GM10248 (cell line): ENCODE measurements at regions of chr7 and their contacts with region 1.

Region 1: GRCh38 chr7:11212080-11212711 is 238.5 kb downstream of the PHF14 start:
- DNase-seq: peak; percentile 39
- CTCF ChIP-seq: peak; percentile 89

Region 2: DNA sequence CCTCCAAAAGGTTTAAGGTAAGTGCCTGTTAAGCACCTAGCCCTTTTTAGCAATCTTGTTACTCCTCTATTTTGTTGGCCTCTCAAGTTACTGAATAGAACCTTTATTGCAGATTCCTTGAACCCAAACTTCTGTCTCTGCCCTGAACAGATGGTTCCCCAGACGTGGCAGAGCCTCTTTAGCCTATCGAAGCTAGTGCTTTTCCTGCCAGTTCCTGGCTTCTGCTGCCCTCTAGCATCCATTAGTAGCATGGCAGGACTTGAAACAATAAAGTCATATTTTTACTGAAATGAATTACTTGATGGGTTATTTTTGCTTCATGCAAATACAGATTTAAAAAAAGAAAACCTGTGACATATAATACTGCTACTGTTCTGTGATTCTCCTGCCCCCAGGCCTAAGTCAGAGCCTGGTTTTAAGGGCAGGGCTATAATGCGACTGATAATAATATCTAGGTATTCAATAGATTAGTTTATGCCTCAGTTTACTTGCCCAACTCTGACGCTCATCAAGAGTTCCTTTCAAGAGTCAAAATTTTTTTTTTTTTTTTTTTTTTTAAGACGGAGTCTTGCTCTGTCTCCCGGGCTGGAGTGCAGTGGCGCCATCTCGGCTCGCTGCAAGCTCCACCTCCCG is 322.8 kb before region 1 on chr7:
- CTCF ChIA-PET with region 1: interaction called, 12 read pairs
- POLR2A ChIA-PET with region 1: no interaction called
- DNase-seq: peak; percentile 71
- CTCF ChIP-seq: peak; percentile 82

Region 3: GRCh38 chr7:10939911-10940703 is 272.1 kb before region 1 on chr7:
- CTCF ChIA-PET with region 1: interaction called, 13 read pairs
- POLR2A ChIA-PET with region 1: no interaction called
- DNase-seq: peak; percentile 95
- CTCF ChIP-seq: no peak

Region 4: DNA sequence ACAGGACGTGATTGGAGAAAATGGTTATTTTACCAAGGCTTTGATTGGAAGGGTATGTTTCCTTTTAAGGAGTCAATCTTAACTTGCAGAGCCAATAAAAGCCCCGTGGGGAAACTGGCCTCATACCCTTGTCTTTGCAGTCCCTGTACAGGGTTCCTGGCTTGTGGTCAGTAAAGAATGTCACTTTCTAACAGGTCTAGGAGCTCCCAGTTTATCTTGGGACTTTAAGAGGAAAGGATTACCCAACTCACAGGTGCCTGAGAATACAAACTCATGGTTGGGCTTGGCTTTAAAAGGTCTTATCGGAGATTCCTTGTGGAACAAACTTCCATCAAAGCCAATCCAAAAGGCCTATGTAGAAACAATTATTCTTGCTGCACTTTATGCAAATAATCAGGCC is 16.7 kb before region 1 on chr7:
- CTCF ChIA-PET with region 1: interaction called, 14 read pairs
- POLR2A ChIA-PET with region 1: no interaction called
- DNase-seq: no peak
- CTCF ChIP-seq: no peak

Region 5: DNA sequence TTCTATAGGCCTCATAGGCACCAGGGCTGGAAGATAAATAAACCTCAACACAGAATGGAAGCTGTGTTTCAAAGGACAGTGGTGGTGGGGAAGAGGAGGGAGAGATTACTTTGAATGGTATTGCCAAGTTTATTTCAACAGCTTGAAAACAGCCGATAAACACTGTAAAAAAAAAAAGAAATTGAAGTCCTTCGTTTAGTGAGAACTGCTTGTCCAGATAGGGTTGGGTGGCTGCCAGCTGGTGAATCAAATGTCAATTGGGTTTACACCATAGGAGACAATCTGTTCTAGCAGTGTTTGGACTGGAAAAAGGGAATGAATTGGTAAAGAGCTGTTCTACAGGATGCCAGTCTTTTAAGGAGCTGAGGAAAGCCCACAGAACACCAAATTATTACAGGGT is 16.3 kb after region 1 on chr7:
- CTCF ChIA-PET with region 1: interaction called, 45 read pairs
- POLR2A ChIA-PET with region 1: no interaction called
- DNase-seq: no peak
- CTCF ChIP-seq: no peak

Region 6: GRCh38 chr7:11369696-11370095 is 157.5 kb after region 1 on chr7:
- CTCF ChIA-PET with region 1: no interaction called
- POLR2A ChIA-PET with region 1: no interaction called
- DNase-seq: no peak
- CTCF ChIP-seq: no peak

Region 7: GRCh38 chr7:12146813-12147212 is 934.6 kb after region 1 on chr7:
- CTCF ChIA-PET with region 1: no interaction called
- POLR2A ChIA-PET with region 1: no interaction called
- DNase-seq: no peak
- CTCF ChIP-seq: no peak